ENCODE measurements at regions of chr10 and their contacts with region 1.

Region 1: DNA sequence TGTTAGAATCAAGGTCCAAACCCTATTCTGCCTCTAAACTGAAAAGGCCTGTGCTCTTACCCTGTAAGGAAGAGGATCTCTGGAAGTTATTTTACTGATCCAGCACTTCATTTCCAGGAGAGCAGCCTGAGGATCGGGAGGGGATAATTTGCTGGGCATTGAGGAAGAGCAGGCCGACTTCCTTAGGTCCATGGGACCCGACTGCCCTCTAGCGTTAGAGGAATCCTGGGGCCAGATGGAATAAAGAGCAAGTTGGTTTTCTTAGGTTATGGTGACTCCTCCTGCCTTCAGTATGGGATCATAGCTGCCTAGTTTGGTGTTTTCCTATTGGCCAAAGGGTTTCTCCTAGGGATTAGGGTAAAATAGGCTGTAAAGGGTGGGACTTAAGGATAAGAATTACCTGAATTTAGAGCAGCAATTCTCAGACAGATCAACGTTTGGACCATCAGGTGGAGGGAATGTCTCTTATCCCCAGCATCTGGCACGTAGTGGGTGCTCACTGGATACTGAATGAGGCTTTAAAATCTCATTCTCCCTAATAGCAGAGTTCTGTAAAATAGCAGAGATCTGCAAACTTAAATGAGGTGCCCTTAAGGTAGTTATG is 40.0 kb upstream of the SORBS1 start:
- DNase-seq: peak; percentile 86 to 89
- H3K4me3 ChIP-seq: no peak overlapping the region
- H3K4me3 Mint-ChIP-seq: no peak overlapping the region
- H3K27ac Mint-ChIP-seq: no peak overlapping the region
- H3K4me1 ChIP-seq: 0 out of 2 replicates have a peak, but pooled peaks cover 3% of the 10 kb centered on the region
- H3K4me1 Mint-ChIP-seq: peaks cover 8% of the 10 kb centered on the region
- H3K27me3 ChIP-seq: no peaks in the 10 kb centered on the region
- H3K27me3 Mint-ChIP-seq: no peaks in the 10 kb centered on the region
- CTCF ChIP-seq: peak; percentile 85 to 97

Region 2: GRCh38 chr10:95133016-95133752 is 468.0 kb before region 1 on chr10:
- CTCF ChIA-PET with region 1: no interaction called
- POLR2A ChIA-PET with region 1: no interaction called
- intact Hi-C with region 1: loop called (anchors 2 kb)
- DNase-seq: peak; percentile 86 to 89
- H3K4me3 ChIP-seq: no peak overlapping the region
- H3K4me3 Mint-ChIP-seq: no peak overlapping the region
- H3K27ac Mint-ChIP-seq: peak overlapping the region; percentile 53
- H3K4me1 ChIP-seq: peaks cover 22% of the 10 kb centered on the region
- H3K4me1 Mint-ChIP-seq: peaks cover 22% of the 10 kb centered on the region
- H3K27me3 ChIP-seq: no peaks in the 10 kb centered on the region
- H3K27me3 Mint-ChIP-seq: no peaks in the 10 kb centered on the region
- CTCF ChIP-seq: peak; percentile 77 to 94

Region 3: GRCh38 chr10:95374597-95375209 is 226.5 kb before region 1 on chr10:
- CTCF ChIA-PET with region 1: interaction called, 9 read pairs
- POLR2A ChIA-PET with region 1: no interaction called
- intact Hi-C with region 1: loop called (anchors 1 kb)
- DNase-seq: peak; percentile 79 to 85
- H3K4me3 ChIP-seq: no peak overlapping the region
- H3K4me3 Mint-ChIP-seq: no peak overlapping the region
- H3K27ac Mint-ChIP-seq: no peak overlapping the region
- H3K4me1 ChIP-seq: no peaks in the 10 kb centered on the region
- H3K4me1 Mint-ChIP-seq: no peaks in the 10 kb centered on the region
- H3K27me3 ChIP-seq: no peaks in the 10 kb centered on the region
- H3K27me3 Mint-ChIP-seq: no peaks in the 10 kb centered on the region
- CTCF ChIP-seq: peak; percentile 94 to 95

Region 4: DNA sequence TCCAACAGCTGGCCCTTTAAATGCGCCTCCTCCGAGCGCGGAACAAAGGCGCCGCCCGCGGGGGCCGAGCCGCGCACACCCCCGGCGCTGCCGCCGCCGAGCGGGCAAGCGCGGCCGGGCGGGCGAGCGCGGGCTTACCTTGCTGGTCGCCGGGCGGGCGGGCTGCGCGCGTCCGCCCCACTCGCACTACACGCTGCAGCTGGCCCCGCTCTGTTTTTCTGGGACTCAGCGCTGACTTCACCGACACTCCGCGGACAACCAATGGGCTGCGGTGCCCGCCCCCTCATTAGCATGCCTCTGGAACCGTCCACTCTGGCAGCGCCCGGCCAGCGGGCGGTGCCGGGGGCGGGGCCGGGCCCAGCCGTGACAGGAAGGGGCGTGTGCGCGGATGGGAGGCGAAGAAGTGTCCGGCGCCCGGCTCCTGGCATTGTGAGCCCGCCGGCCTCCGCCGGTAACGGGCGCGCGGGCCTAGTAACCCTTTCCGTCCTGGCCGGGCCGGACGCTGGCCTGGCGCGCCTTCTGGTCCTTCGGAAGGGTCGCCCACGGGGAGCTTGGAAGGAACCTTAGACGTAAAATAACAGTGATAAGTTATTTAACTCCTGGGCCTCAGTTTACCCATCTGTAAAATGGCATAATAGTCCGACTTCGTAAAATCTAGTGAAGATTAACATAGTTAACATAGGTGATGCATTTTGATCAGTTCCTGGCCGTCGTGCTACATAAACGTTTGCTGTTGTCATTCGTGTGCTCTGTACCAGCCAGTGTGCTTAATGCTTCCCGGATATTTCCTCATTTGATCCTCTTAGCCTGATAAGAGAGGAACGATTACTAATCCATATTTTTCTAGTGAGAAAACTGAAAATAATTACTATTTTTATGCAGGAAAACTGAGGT is 39.8 kb before region 1 on chr10 and contains the start of gene SORBS1:
- CTCF ChIA-PET with region 1: no interaction called
- POLR2A ChIA-PET with region 1: no interaction called
- intact Hi-C with region 1: loop called (anchors 1 kb)
- DNase-seq: peak; percentile 98
- H3K4me3 ChIP-seq: peak within 1 kb of the TSS; percentile 89
- H3K4me3 Mint-ChIP-seq: peak within 1 kb of the TSS; percentile 99
- H3K27ac Mint-ChIP-seq: peak within 1 kb of the TSS; percentile 83
- H3K4me1 ChIP-seq: peaks cover 50% of the 10 kb centered on the region
- H3K4me1 Mint-ChIP-seq: peaks cover 59% of the 10 kb centered on the region
- H3K27me3 ChIP-seq: no peaks in the 10 kb centered on the region
- H3K27me3 Mint-ChIP-seq: no peaks in the 10 kb centered on the region
- CTCF ChIP-seq: no peak
- total RNA-seq, gene SORBS1: 39.3 and 44.1 TPM in 2 replicates

Measured in Caco-2 (cell line).